HepG2 (cell line): ENCODE measurements at regions of chr2 and their contacts with region 1.

Region 1: GRCh38 chr2:142347751-142348150 is 216.9 kb upstream of the LRP1B start:
- DNase-seq: no peak
- ATAC-seq: no peak
- H3K4me3 ChIP-seq: no peak overlapping the region
- H3K27ac ChIP-seq: no peak overlapping the region
- H3K4me1 ChIP-seq: no peaks in the 10 kb centered on the region
- H3K27me3 ChIP-seq: no peaks in the 10 kb centered on the region
- CTCF ChIP-seq: no peak
- EP300 ChIP-seq: no peak
- POLR2A ChIP-seq: no peak
- RAD21 ChIP-seq: no peak

Region 2: GRCh38 chr2:142306126-142306525 is 41.6 kb before region 1 on chr2:
- CTCF ChIA-PET with region 1: no interaction called
- POLR2A ChIA-PET with region 1: no interaction called
- in situ Hi-C with region 1: no loop called
- intact Hi-C with region 1: loop called (anchors 1 kb)
- DNase-seq: no peak
- ATAC-seq: no peak
- H3K4me3 ChIP-seq: no peak overlapping the region
- H3K27ac ChIP-seq: no peak overlapping the region
- H3K4me1 ChIP-seq: no peaks in the 10 kb centered on the region
- H3K27me3 ChIP-seq: no peaks in the 10 kb centered on the region
- CTCF ChIP-seq: no peak
- EP300 ChIP-seq: no peak
- POLR2A ChIP-seq: no peak
- RAD21 ChIP-seq: no peak